AG04449 (cell line): ENCODE measurements at regions of chr1 and their contacts with region 1.

Region 1: DNA sequence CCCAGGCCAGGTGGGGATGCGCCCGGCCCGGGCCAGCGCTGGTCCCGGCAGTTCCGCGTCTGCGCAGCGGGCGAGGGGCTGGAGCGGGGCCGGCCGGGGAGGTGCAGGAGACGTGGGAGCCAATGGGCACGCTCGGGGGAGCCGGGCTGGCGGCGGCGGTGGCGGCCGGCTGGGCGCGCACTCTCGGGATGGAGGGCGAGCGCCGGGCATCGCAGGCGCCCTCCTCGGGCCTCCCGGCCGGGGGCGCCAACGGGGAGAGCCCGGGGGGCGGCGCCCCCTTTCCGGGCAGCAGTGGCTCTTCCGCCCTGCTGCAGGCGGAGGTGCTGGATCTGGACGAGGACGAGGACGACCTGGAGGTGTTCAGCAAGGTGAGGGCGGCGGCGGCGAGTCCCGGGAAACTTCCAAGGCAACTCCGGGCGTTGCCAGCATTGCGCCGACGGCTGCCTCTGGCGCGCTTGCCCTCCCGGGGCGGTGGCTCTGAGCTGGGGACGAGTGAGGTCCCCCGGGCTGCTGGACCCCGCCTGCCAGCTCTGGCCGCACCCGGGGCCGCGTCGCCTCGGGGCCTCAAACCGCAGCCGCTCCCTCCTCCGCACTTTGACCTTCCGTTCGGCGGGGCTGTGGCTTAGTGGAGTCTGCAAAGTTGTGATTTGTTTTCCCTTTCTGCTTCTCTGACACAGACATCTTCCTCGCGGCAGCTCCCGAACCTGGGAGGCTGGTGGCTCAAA is at the start of gene SNX7:
- DNase-seq: no peak
- H3K4me3 ChIP-seq: peak within 1 kb of the TSS; percentile 80
- CTCF ChIP-seq: peak; percentile 26

Region 2: DNA sequence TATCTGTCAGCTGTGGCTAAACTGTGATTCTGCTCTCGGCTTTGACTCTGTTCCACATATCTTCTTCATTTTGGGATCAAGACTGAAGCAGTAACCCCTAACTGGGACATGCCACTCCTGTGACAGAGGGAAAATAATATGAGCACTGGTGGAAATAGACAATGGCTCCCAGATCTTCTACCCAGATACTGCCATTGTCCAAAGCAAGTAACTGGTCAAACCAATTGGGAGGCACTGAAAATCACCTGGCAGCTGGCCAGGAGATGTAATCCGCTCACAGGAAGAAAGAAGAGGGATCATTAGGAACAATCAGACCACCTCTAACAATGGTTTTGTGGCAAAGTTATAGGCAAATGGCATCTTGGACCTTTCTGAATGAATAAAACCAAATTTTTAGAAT is 10.5 kb after region 1 on chr1:
- CTCF ChIA-PET with region 1: interaction called, 11 read pairs
- POLR2A ChIA-PET with region 1: no interaction called
- DNase-seq: no peak
- H3K4me3 ChIP-seq: no peak overlapping the region
- CTCF ChIP-seq: no peak